ENCODE measurements at regions of chr6 and their contacts with region 1.

Region 1: GRCh38 chr6:56595490-56596122 is 47.1 kb downstream of the DST start:
- DNase-seq: peak; percentile 73
- H3K4me3 ChIP-seq: no peak overlapping the region
- H3K27ac ChIP-seq: no peak overlapping the region
- H3K4me1 ChIP-seq: peaks cover 25% of the 10 kb centered on the region
- CTCF ChIP-seq: peak; percentile 83

Region 2: DNA sequence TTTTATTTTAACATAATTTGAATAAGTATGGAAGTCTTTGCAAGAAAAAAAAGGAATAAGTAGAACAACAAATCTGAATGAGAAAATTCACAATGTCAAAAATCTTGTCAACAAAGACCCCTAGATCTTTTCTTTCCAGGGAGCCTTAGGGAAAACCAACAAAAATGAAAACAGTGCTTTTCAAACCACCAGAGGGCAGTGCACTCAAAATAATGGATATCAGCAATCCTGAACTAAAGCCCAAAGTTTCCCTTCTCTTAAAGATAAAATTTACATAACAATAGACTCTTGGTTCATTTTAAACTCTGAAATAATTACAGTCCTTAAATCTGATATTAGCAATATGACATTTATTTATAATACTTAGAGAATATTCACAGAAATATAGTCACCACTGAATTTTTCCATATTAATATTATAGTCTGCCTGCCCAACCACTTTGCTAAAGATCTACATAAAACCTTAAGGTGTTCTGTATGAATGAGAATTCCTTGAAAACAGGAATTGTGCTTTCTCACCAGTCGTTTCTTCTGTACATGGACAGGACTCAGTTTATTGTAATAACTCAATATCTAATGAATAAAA is 614.9 kb before region 1 on chr6:
- CTCF ChIA-PET with region 1: no interaction called
- POLR2A ChIA-PET with region 1: no interaction called
- intact Hi-C with region 1: loop called (anchors 10 kb)
- DNase-seq: peak; percentile 22
- H3K4me3 ChIP-seq: no peak overlapping the region
- H3K27ac ChIP-seq: no peak overlapping the region
- H3K4me1 ChIP-seq: no peaks in the 10 kb centered on the region
- CTCF ChIP-seq: peak; percentile 92

Region 3: GRCh38 chr6:56314683-56315523 is 280.7 kb before region 1 on chr6:
- CTCF ChIA-PET with region 1: no interaction called
- POLR2A ChIA-PET with region 1: no interaction called
- intact Hi-C with region 1: loop called (anchors 2 kb)
- DNase-seq: peak; percentile 31
- H3K4me3 ChIP-seq: no peak overlapping the region
- H3K27ac ChIP-seq: no peak overlapping the region
- H3K4me1 ChIP-seq: no peaks in the 10 kb centered on the region
- CTCF ChIP-seq: peak; percentile 93

Region 4: DNA sequence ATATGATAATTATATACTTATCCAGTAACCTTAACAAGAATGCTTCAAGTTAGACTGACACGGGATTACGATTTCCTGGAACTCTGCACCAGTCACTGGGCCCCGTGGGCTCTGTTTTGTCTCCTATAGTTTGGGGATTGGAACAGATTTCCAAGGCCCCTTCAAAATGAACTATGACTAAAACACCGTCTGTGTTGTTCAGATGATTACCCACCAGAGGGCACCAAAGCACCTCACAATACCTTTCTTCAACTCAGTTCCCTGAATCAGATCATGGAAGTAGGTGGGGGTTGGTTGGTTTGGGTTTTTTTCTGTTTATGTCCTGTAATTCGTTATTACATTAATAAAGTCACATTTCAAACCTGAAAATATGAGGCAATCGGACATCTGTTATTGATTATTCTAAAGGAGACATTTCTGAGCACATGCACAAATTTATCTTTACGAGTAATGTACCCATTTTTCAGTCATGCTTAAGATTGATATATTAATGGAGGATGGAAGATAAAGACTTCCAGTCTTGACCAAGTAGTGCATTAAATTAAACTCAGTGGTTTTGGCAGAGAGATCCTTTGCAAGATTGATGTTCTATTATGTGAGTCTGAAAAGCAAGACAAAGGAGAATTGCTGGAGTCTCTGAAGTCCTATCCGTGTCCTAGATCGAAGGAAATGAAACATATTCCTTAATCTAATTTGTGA is 236.3 kb before region 1 on chr6:
- CTCF ChIA-PET with region 1: interaction called, 4 read pairs
- POLR2A ChIA-PET with region 1: interaction called, 3 read pairs
- intact Hi-C with region 1: loop called (anchors 1 kb)
- DNase-seq: peak; percentile 68
- H3K4me3 ChIP-seq: no peak overlapping the region
- H3K27ac ChIP-seq: no peak overlapping the region
- H3K4me1 ChIP-seq: no peaks in the 10 kb centered on the region
- CTCF ChIP-seq: peak; percentile 89

Region 5: GRCh38 chr6:56549014-56549413 is 46.6 kb before region 1 on chr6:
- CTCF ChIA-PET with region 1: interaction called, 3 read pairs
- POLR2A ChIA-PET with region 1: no interaction called
- intact Hi-C with region 1: loop called (anchors 1 kb)
- DNase-seq: peak; percentile 29
- H3K4me3 ChIP-seq: no peak overlapping the region
- H3K27ac ChIP-seq: no peak overlapping the region
- H3K4me1 ChIP-seq: peaks cover 15% of the 10 kb centered on the region
- CTCF ChIP-seq: peak; percentile 77

Region 6: GRCh38 chr6:56581296-56581925 is 14.2 kb before region 1 on chr6:
- CTCF ChIA-PET with region 1: no interaction called
- POLR2A ChIA-PET with region 1: no interaction called
- intact Hi-C with region 1: no loop called
- DNase-seq: no peak
- H3K4me3 ChIP-seq: no peak overlapping the region
- H3K27ac ChIP-seq: no peak overlapping the region
- H3K4me1 ChIP-seq: no peaks in the 10 kb centered on the region
- CTCF ChIP-seq: no peak

Measured in OCI-LY7 (cell line).